Heart left ventricle (tissue), 16 donors: ENCODE measurements at regions of chr18 and their contacts with region 1.

Region 1: GRCh38 chr18:43563780-43564179 is 286.5 kb upstream of the SYT4 start:
- DNase-seq: no peak
- ATAC-seq: peak in 3 of 4 donors; percentile 61 to 66 (median 65)
- H3K4me3 ChIP-seq: no peak overlapping the region
- H3K27ac ChIP-seq: no peak overlapping the region
- H3K4me1 ChIP-seq: peaks cover 0 to 3% (median 0%) of the 10 kb centered on the region in 12 donors
- H3K27me3 ChIP-seq: no peaks in the 10 kb centered on the region
- CTCF ChIP-seq: peak; percentile 13 to 58 (median 45)
- POLR2A ChIP-seq: no peak

Region 2: GRCh38 chr18:42053188-42053781 is 1510.5 kb before region 1 on chr18:
- intact Hi-C with region 1: loop called in 6 of 10 experiments (anchors 5 to 10 kb)
- DNase-seq: peak in 4 of 5 donors; percentile 29 to 41 (median 32)
- ATAC-seq: peak in 3 of 4 donors; percentile 54 to 69 (median 64)
- H3K4me3 ChIP-seq: peak overlapping the region in 1 of 12 donors; percentile 25
- H3K27ac ChIP-seq: no peak overlapping the region
- H3K4me1 ChIP-seq: peaks cover 0 to 8% (median 0%) of the 10 kb centered on the region in 12 donors
- H3K27me3 ChIP-seq: no peaks in the 10 kb centered on the region
- CTCF ChIP-seq: peak; percentile 69 to 91 (median 81)
- POLR2A ChIP-seq: no peak

Region 3: DNA sequence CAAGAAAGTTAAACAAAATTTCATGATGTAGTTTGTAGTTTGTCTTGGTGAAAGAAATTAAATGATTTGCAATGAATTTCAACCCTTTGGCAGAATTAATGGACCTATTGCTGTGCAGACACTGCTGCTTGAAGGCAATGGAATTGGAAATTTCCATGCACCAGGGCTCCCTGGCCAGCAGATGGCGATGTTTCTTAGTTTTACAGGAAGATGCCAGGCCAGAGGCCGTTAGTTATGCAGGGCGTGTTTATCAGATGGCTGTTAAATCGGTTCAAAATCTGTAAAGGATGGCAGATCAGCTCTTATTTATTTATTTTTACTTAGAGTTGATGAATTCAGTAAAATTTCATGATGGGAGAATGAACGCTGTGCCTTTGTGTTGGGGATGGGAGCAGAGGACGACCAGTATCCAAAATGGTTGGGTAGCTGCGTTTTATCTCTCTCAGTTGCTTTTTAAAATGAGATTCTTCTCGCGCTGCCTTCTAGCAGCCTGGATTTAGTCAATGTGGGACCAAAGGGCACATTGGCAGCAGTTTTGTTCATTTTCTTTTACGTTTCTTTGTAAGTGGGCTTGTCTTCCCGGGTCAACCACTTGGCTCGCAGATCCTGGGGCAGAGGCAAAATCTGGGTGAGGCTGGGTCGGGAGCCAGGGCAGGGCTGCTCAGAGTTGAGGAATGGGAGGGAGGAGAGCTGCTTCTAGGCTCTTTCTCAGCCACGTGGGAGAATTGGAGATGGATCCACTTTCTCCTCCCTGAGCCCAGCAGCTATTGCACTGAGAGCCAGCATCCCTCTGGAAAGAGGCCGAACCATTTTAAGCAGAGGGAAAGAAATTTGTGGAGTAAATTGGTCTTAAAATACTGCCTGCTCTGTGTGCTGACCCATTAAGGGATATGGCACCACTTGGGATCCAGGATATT is 1264.8 kb before region 1 on chr18:
- intact Hi-C with region 1: loop called in 5 of 10 experiments (anchors 10 kb)
- DNase-seq: peak in 4 of 5 donors; percentile 54 to 58 (median 57)
- ATAC-seq: peak; percentile 20 to 94 (median 82)
- H3K4me3 ChIP-seq: peak overlapping the region in 11 of 12 donors; percentile 1 to 43 (median 19)
- H3K27ac ChIP-seq: peak overlapping the region in 6 of 12 donors; percentile 9 to 40 (median 27)
- H3K4me1 ChIP-seq: peaks cover 0 to 3% (median 0%) of the 10 kb centered on the region in 12 donors
- H3K27me3 ChIP-seq: no peaks in the 10 kb centered on the region
- CTCF ChIP-seq: peak; percentile 83 to 96 (median 90)
- POLR2A ChIP-seq: no peak

Region 4: DNA sequence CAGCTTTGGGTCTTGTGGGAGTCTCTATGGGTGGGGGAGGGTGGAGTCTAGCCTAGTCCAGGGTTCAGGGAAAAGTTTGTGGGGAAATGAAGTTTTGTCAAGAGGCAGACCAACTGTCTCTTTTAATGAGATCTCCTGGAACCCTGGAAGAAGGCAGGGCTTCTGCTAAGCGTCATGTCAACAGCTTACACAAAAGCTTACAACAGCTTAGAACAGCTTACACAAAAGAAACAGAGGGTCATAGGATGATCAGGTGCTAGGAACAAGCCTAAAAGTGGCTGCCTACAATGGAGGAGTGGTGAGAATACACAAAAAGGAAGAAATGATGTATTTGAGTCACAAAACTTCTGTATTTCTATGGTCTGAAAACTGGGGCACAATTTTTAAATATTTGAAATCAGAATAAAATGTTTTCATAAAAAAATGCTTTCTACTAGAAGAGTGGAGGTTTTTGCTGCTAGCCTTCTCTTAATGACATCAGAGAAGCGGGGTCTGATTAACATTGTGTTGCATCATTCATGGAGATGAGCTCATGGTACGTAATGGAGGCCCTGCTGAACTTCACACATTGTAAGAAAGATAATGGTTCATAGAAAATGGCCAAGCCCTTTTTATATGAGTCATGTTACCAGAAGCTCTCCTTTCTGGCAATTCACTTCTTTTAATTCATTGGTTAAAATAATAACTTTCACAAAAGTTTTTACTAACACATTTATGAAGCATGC is 1257.7 kb before region 1 on chr18:
- intact Hi-C with region 1: loop called in 1 of 10 experiments (anchors 10 kb)
- DNase-seq: no peak
- ATAC-seq: peak in 1 of 4 donors; percentile 49
- H3K4me3 ChIP-seq: no peak overlapping the region
- H3K27ac ChIP-seq: no peak overlapping the region
- H3K4me1 ChIP-seq: peaks cover 0 to 11% (median 2%) of the 10 kb centered on the region in 12 donors
- H3K27me3 ChIP-seq: no peaks in the 10 kb centered on the region
- CTCF ChIP-seq: no peak
- POLR2A ChIP-seq: no peak

Region 5: GRCh38 chr18:42586601-42587000 is 977.2 kb before region 1 on chr18:
- intact Hi-C with region 1: loop called in 4 of 10 experiments (anchors 10 kb)
- DNase-seq: no peak
- ATAC-seq: no peak
- H3K4me3 ChIP-seq: no peak overlapping the region
- H3K27ac ChIP-seq: no peak overlapping the region
- H3K4me1 ChIP-seq: no peaks in the 10 kb centered on the region
- H3K27me3 ChIP-seq: no peaks in the 10 kb centered on the region
- CTCF ChIP-seq: no peak
- POLR2A ChIP-seq: no peak

Region 6: GRCh38 chr18:42828881-42829280 is 734.9 kb before region 1 on chr18:
- intact Hi-C with region 1: no loop called
- DNase-seq: no peak
- ATAC-seq: no peak
- H3K4me3 ChIP-seq: no peak overlapping the region
- H3K27ac ChIP-seq: no peak overlapping the region
- H3K4me1 ChIP-seq: no peaks in the 10 kb centered on the region
- H3K27me3 ChIP-seq: no peaks in the 10 kb centered on the region
- CTCF ChIP-seq: no peak
- POLR2A ChIP-seq: no peak

Region 7: GRCh38 chr18:43648002-43648401 is 84.2 kb after region 1 on chr18:
- intact Hi-C with region 1: no loop called
- DNase-seq: no peak
- ATAC-seq: no peak
- H3K4me3 ChIP-seq: no peak overlapping the region
- H3K27ac ChIP-seq: no peak overlapping the region
- H3K4me1 ChIP-seq: no peaks in the 10 kb centered on the region
- H3K27me3 ChIP-seq: no peaks in the 10 kb centered on the region
- CTCF ChIP-seq: no peak
- POLR2A ChIP-seq: no peak